ENCODE measurements at regions of chr12 and their contacts with region 1.

Region 1: GRCh38 chr12:131830335-131830913 is 2.2 kb downstream of the MMP17 start:
- DNase-seq: peak; percentile 87 to 94 (median 88)
- H3K4me3 ChIP-seq: peak overlapping the region; percentile 38
- H3K27ac ChIP-seq: peak overlapping the region; percentile 62 to 76
- H3K4me1 ChIP-seq: peaks cover 8% of the 10 kb centered on the region
- H3K27me3 ChIP-seq: no peaks in the 10 kb centered on the region
- CTCF ChIP-seq: peak; percentile 65 to 85 (median 77)
- EP300 ChIP-seq: no peak
- POLR2A ChIP-seq: peak; percentile 44

Region 2: GRCh38 chr12:130916251-130916911 is 914.0 kb before region 1 on chr12:
- intact Hi-C with region 1: loop called in 2 of 4 experiments (anchors 5 to 10 kb)
- DNase-seq: peak; percentile 64 to 83 (median 75)
- H3K4me3 ChIP-seq: peak overlapping the region; percentile 1
- H3K27ac ChIP-seq: no peak overlapping the region
- H3K4me1 ChIP-seq: no peaks in the 10 kb centered on the region
- H3K27me3 ChIP-seq: no peaks in the 10 kb centered on the region
- CTCF ChIP-seq: peak; percentile 96 to 98 (median 97)
- EP300 ChIP-seq: no peak
- POLR2A ChIP-seq: no peak

Region 3: DNA sequence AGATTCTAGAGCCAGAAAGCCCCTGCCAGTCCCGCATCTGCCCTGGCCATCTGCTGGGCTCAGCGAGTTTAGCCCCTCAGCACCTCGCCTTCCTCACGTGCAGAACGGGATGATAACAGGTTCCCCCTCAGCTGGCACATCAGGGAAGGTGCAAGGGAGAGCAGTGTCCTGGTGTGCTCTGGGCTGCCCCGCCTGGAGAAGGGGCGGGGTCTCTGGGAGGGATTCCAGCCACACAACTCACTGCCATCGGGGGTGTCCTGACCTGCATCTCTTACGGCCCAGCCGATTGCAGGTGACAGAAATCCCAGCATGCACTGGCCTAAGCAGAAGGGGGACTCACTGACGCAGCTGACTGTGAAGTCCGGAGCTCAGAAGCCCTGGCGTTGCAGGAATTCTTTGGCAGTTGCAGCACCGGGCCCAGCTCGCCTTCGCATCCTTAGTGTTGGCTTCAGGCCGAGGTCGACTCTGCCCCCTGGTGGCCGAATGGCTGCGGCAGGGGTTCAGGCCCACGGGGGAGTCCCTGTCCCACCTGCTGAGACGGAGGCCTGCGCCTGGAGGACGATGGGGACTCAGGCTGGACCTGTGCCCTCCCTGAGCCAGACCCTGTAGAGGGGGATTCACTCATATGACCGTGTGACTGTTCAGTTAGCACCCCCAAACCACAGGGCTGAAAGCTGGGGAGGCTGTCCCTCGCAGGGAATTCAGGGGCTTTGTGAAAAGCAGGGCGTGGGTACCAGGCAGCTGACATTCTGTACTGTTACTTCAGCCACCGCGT is 698.1 kb before region 1 on chr12:
- intact Hi-C with region 1: loop called in 1 of 4 experiments (anchors 10 kb)
- DNase-seq: peak; percentile 79 to 91 (median 84)
- H3K4me3 ChIP-seq: no peak overlapping the region
- H3K27ac ChIP-seq: peak overlapping the region; percentile 45 to 60
- H3K4me1 ChIP-seq: peaks cover 1% of the 10 kb centered on the region
- H3K27me3 ChIP-seq: no peaks in the 10 kb centered on the region
- CTCF ChIP-seq: peak; percentile 67 to 83 (median 70)
- EP300 ChIP-seq: no peak
- POLR2A ChIP-seq: no peak

Region 4: GRCh38 chr12:131608740-131609690 is 221.4 kb before region 1 on chr12:
- intact Hi-C with region 1: loop called in 1 of 4 experiments (anchors 5 kb)
- DNase-seq: peak; percentile 50 to 84 (median 73)
- H3K4me3 ChIP-seq: no peak overlapping the region
- H3K27ac ChIP-seq: no peak overlapping the region
- H3K4me1 ChIP-seq: peaks cover 2% of the 10 kb centered on the region
- H3K27me3 ChIP-seq: no peaks in the 10 kb centered on the region
- CTCF ChIP-seq: peak; percentile 63 to 68 (median 68)
- EP300 ChIP-seq: no peak
- POLR2A ChIP-seq: no peak

Region 5: DNA sequence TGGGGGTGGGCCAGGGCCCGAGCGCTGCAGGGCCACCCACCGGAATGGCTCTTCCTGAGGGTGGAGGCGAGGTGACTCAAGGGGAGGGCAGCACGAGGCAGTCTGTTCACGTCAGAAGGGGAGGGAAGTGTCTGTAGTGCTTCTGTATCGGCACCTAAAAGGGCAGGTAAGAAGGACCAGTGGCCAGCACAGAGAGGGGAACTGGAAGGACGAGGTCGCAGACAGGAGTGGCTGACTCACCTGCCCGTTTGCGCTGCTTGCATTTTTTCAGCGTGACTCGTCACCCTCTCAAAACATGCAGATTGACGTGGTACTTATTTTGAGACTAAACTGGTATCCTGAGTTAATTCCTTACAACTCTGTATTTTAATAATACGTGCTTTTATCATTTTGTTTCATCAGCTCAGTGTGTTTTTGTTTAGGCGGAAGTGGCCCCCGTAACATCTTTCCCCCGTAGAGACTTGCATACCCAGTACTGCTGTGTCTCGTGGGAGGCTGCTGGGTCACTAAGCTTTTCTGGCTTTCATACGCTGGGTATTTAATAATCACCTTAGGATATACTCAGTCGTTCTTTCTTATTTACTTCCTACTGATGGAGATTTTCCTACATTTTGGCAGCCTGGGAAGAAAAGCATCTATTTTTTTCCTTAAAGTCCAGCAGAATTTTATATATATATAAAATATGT is 93.1 kb before region 1 on chr12:
- intact Hi-C with region 1: no loop called
- DNase-seq: no peak
- H3K4me3 ChIP-seq: no peak overlapping the region
- H3K27ac ChIP-seq: no peak overlapping the region
- H3K4me1 ChIP-seq: no peaks in the 10 kb centered on the region
- H3K27me3 ChIP-seq: no peaks in the 10 kb centered on the region
- CTCF ChIP-seq: no peak
- EP300 ChIP-seq: no peak
- POLR2A ChIP-seq: no peak

Region 6: GRCh38 chr12:131896080-131896810 is 65.8 kb after region 1 on chr12:
- intact Hi-C with region 1: loop called in 1 of 4 experiments (anchors 5 kb)
- DNase-seq: peak; percentile 93 to 96 (median 94)
- H3K4me3 ChIP-seq: peak overlapping the region; percentile 60
- H3K27ac ChIP-seq: peak overlapping the region; percentile 98
- H3K4me1 ChIP-seq: peaks cover 7% of the 10 kb centered on the region
- H3K27me3 ChIP-seq: no peaks in the 10 kb centered on the region
- CTCF ChIP-seq: peak in 1 of 3 donors; percentile 29
- EP300 ChIP-seq: peak; percentile 90
- POLR2A ChIP-seq: peak; percentile 96

Measured in ovary (tissue), 10 donors.